ENCODE measurements at regions of chr10 and their contacts with region 1.

Region 1: GRCh38 chr10:102480396-102480795 is 22.1 kb downstream of the ACTR1A start:
- DNase-seq: no peak
- ATAC-seq: no peak
- H3K4me3 ChIP-seq: no peak overlapping the region
- H3K4me3 Mint-ChIP-seq: peak overlapping the region; percentile 15
- H3K27ac ChIP-seq: no peak overlapping the region
- H3K27ac Mint-ChIP-seq: no peak overlapping the region
- H3K4me1 ChIP-seq: peaks cover 16% of the 10 kb centered on the region
- H3K4me1 Mint-ChIP-seq: peaks cover 17% of the 10 kb centered on the region
- H3K27me3 ChIP-seq: no peaks in the 10 kb centered on the region
- H3K27me3 Mint-ChIP-seq: no peaks in the 10 kb centered on the region
- CTCF ChIP-seq: no peak

Region 2: GRCh38 chr10:102120142-102120990 is 360.0 kb before region 1 on chr10 and contains the start of gene LDB1:
- CTCF ChIA-PET with region 1: no interaction called
- POLR2A ChIA-PET with region 1: no interaction called
- intact Hi-C with region 1: no loop called
- DNase-seq: peak; percentile 52 to 92 (median 66)
- ATAC-seq: peak; percentile 38
- H3K4me3 ChIP-seq: peak within 1 kb of the TSS; percentile 74
- H3K4me3 Mint-ChIP-seq: peak within 1 kb of the TSS; percentile 95
- H3K27ac ChIP-seq: peak within 1 kb of the TSS; percentile 88 to 96
- H3K27ac Mint-ChIP-seq: peak within 1 kb of the TSS; percentile 89
- H3K4me1 ChIP-seq: peaks cover 57% of the 10 kb centered on the region
- H3K4me1 Mint-ChIP-seq: peaks cover 55% of the 10 kb centered on the region
- H3K27me3 ChIP-seq: no peaks in the 10 kb centered on the region
- H3K27me3 Mint-ChIP-seq: no peaks in the 10 kb centered on the region
- CTCF ChIP-seq: no peak
- total RNA-seq, gene LDB1: 116 to 117 TPM

Region 3: GRCh38 chr10:102384053-102384452 is 96.3 kb before region 1 on chr10:
- CTCF ChIA-PET with region 1: interaction called, 10 read pairs
- POLR2A ChIA-PET with region 1: no interaction called
- intact Hi-C with region 1: no loop called
- DNase-seq: peak in 3 of 14 experiments; percentile 26 to 57 (median 48)
- ATAC-seq: no peak
- H3K4me3 ChIP-seq: no peak overlapping the region
- H3K4me3 Mint-ChIP-seq: no peak overlapping the region
- H3K27ac ChIP-seq: no peak overlapping the region
- H3K27ac Mint-ChIP-seq: no peak overlapping the region
- H3K4me1 ChIP-seq: no peaks in the 10 kb centered on the region
- H3K4me1 Mint-ChIP-seq: no peaks in the 10 kb centered on the region
- H3K27me3 ChIP-seq: no peaks in the 10 kb centered on the region
- H3K27me3 Mint-ChIP-seq: no peaks in the 10 kb centered on the region
- CTCF ChIP-seq: no peak

Region 4: GRCh38 chr10:102461187-102462054 is 19.0 kb before region 1 on chr10:
- CTCF ChIA-PET with region 1: interaction called, 5 read pairs
- POLR2A ChIA-PET with region 1: interaction called, 3 read pairs
- intact Hi-C with region 1: loop called in 1 of 2 experiments (anchors 2 kb)
- DNase-seq: peak; percentile 87 to 97 (median 93)
- ATAC-seq: peak; percentile 100
- H3K4me3 ChIP-seq: peak overlapping the region; percentile 72
- H3K4me3 Mint-ChIP-seq: peak overlapping the region; percentile 92
- H3K27ac ChIP-seq: peak overlapping the region in 1 of 2 donors; percentile 38
- H3K27ac Mint-ChIP-seq: peak overlapping the region; percentile 70
- H3K4me1 ChIP-seq: peaks cover 28% of the 10 kb centered on the region
- H3K4me1 Mint-ChIP-seq: peaks cover 29% of the 10 kb centered on the region
- H3K27me3 ChIP-seq: no peaks in the 10 kb centered on the region
- H3K27me3 Mint-ChIP-seq: no peaks in the 10 kb centered on the region
- CTCF ChIP-seq: no peak

Measured in CD4-positive, alpha-beta T cell (primary cell).